ENCODE measurements at regions of chr1 and their contacts with region 1.

Region 1: GRCh38 chr1:29513357-29513756 is 277.0 kb downstream of the PTPRU start:
- DNase-seq: no peak
- ATAC-seq: peak; percentile 88

Region 2: DNA sequence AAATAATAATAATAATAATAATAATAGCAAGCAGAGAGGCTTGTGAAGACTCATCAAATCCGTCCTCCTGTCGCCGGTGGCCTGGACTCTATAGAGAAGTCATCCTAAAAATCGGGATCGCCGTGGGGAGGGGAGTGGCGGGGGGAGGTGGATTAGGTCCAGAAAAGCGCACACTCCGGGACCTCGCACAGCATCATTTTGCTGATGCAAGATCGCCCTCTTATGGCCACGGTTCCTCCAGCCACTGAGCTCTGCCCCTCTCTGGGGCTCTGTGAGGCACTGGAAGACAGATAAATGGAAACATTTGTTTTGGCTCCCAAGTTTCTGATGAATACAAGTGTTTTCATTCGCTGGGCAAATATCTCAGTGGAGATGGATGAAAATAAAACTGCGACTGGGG is 598.1 kb after region 1 on chr1:
- intact Hi-C with region 1: loop called (anchors 10 kb)
- DNase-seq: peak; percentile 51
- ATAC-seq: peak; percentile 74

Measured in Right ventricle myocardium superior (tissue), 1 donor.